CD8-positive, alpha-beta T cell (primary cell): ENCODE measurements at regions of chr11 and their contacts with region 1.

Region 1: GRCh38 chr11:32893343-32894148 is 935 bp downstream of the QSER1 start:
- DNase-seq: peak in 8 of 9 experiments; percentile 21 to 75 (median 54)
- ATAC-seq: peak; percentile 50
- H3K4me3 ChIP-seq: peak overlapping the region; percentile 79 to 87
- H3K4me3 Mint-ChIP-seq: peak overlapping the region; percentile 92
- H3K27ac ChIP-seq: peak overlapping the region; percentile 36 to 51
- H3K27ac Mint-ChIP-seq: peak overlapping the region; percentile 74
- H3K4me1 ChIP-seq: peaks cover 27% of the 10 kb centered on the region
- H3K4me1 Mint-ChIP-seq: peaks cover 33% of the 10 kb centered on the region
- H3K27me3 ChIP-seq: no peaks in the 10 kb centered on the region
- H3K27me3 Mint-ChIP-seq: no peaks in the 10 kb centered on the region
- CTCF ChIP-seq: peak; percentile 35

Region 2: DNA sequence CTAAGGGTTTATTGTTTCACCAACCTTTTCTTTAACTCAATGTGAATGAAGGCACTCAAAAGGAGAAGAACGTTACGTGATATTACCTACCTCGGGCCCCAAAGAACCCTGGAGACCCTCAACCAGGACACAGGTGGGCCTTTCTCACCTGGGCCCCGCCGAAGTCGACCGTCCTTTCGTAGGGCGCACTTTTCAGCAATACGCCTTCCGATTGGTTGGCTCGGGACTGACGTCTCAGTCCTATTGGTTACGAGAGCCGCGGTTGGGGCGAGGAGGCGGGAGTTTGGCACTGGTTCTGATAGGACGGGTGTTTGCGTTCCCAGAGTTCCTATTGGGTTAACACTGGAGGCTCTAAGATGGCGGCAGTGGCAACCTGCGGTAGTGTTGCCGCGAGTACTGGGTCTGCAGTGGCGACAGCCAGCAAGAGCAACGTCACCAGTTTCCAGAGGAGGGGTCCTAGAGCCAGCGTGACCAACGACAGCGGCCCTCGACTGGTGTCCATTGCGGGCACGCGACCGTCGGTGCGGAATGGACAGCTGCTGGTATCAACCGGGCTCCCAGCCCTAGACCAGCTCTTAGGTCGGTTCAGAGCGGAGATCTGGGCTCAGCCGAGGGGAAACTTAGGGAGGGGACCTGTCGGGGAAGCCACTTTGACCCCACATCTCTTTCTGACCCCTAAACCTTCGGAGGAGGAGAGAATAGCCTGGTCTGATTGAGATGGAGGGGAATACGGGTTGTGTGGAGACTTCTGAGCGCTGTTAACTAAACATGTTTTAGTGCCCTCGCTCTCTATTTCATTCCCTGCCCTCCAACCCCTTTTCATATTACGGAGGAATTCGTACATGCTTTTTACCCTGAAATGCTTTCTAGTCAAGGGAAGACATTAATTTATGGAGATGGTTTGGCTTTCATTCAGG is 1383.9 kb before region 1 on chr11 and contains the starts of genes ELP4 and IMMP1L:
- CTCF ChIA-PET with region 1: no interaction called
- POLR2A ChIA-PET with region 1: no interaction called
- intact Hi-C with region 1: loop called in 1 of 2 experiments (anchors 5 kb)
- DNase-seq: peak; percentile 91 to 98 (median 95)
- ATAC-seq: peak; percentile 98
- H3K4me3 ChIP-seq: peak within 1 kb of the TSS; percentile 96 to 99
- H3K4me3 Mint-ChIP-seq: peak within 1 kb of the TSS; percentile 100
- H3K27ac ChIP-seq: peak within 1 kb of the TSS; percentile 86 to 94
- H3K27ac Mint-ChIP-seq: peak within 1 kb of the TSS; percentile 99
- H3K4me1 ChIP-seq: peaks cover 24% of the 10 kb centered on the region
- H3K4me1 Mint-ChIP-seq: peaks cover 58% of the 10 kb centered on the region
- H3K27me3 ChIP-seq: no peaks in the 10 kb centered on the region
- H3K27me3 Mint-ChIP-seq: no peaks in the 10 kb centered on the region
- CTCF ChIP-seq: no peak
- total RNA-seq, gene ELP4: 7.9 to 8.0 TPM
- total RNA-seq, gene IMMP1L: 4.8 to 9.4 TPM

Region 3: GRCh38 chr11:32779136-32779535 is 114.4 kb before region 1 on chr11:
- CTCF ChIA-PET with region 1: no interaction called
- POLR2A ChIA-PET with region 1: no interaction called
- intact Hi-C with region 1: no loop called
- DNase-seq: no peak
- ATAC-seq: no peak
- H3K4me3 ChIP-seq: no peak overlapping the region
- H3K4me3 Mint-ChIP-seq: no peak overlapping the region
- H3K27ac ChIP-seq: no peak overlapping the region
- H3K27ac Mint-ChIP-seq: no peak overlapping the region
- H3K4me1 ChIP-seq: no peaks in the 10 kb centered on the region
- H3K4me1 Mint-ChIP-seq: peaks cover 10% of the 10 kb centered on the region
- H3K27me3 ChIP-seq: no peaks in the 10 kb centered on the region
- H3K27me3 Mint-ChIP-seq: no peaks in the 10 kb centered on the region
- CTCF ChIP-seq: no peak

Region 4: GRCh38 chr11:33039274-33040032 is 145.9 kb after region 1 on chr11 and contains the start of gene TCP11L1:
- CTCF ChIA-PET with region 1: no interaction called
- POLR2A ChIA-PET with region 1: interaction called, 3 read pairs
- intact Hi-C with region 1: loop called (anchors 2 kb)
- DNase-seq: peak; percentile 60 to 89 (median 83)
- ATAC-seq: peak; percentile 81
- H3K4me3 ChIP-seq: peak within 1 kb of the TSS; percentile 98
- H3K4me3 Mint-ChIP-seq: peak within 1 kb of the TSS; percentile 95
- H3K27ac ChIP-seq: peak within 1 kb of the TSS; percentile 71 to 86
- H3K27ac Mint-ChIP-seq: peak within 1 kb of the TSS; percentile 91
- H3K4me1 ChIP-seq: peaks cover 10% of the 10 kb centered on the region
- H3K4me1 Mint-ChIP-seq: peaks cover 20% of the 10 kb centered on the region
- H3K27me3 ChIP-seq: no peaks in the 10 kb centered on the region
- H3K27me3 Mint-ChIP-seq: no peaks in the 10 kb centered on the region
- CTCF ChIP-seq: no peak
- total RNA-seq, gene TCP11L1: 10.9 to 12.3 TPM

Region 5: DNA sequence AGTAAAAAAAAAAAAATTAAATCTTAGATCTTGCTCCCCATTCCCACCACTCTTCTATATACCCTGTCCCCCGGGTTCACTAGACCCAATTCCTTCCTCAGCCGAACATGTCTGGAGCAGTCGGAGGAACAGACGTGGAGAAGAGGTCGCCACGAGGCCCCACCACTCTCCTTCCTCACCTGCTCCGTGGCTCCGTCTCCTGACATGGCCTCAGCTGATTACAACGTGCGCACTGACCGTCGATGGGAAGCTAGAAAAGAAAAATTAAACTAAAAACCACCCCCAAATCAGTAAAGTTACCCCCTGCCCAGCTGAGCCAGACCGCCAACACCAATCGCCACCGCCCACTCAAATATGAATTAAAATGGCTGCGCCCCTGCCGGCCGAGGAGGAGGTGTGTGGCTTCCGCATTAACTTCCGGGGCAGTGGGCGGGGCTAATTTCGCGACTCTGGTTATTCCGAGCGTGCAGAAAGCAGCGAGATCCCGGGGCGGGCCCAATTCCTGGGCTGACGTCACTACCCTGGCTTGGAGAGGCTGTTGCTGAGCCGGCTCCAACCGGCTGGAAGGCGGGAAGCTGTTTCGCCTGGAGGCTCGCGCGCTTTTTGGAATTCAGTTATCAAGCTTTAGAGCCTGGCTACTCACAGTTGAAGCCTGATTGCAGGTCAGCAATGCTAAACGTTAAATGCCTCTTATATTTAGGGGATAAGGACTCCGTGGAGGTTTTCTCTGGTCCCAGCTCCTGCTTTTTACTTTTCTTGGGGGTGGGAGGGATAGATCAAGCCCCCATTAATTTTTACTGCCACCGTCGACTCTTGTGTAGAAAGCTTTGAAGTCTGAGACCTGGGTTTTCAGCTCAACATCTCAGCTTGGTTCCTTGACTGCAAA is 267.8 kb after region 1 on chr11 and contains the start of gene CSTF3:
- CTCF ChIA-PET with region 1: no interaction called
- POLR2A ChIA-PET with region 1: no interaction called
- intact Hi-C with region 1: loop called (anchors 5 kb)
- DNase-seq: peak; percentile 85 to 98 (median 94)
- ATAC-seq: peak; percentile 94
- H3K4me3 ChIP-seq: peak within 1 kb of the TSS; percentile 73 to 79
- H3K4me3 Mint-ChIP-seq: peak within 1 kb of the TSS; percentile 99
- H3K27ac ChIP-seq: peak within 1 kb of the TSS; percentile 77 to 89
- H3K27ac Mint-ChIP-seq: peak within 1 kb of the TSS; percentile 96
- H3K4me1 ChIP-seq: peaks cover 35% of the 10 kb centered on the region
- H3K4me1 Mint-ChIP-seq: peaks cover 47% of the 10 kb centered on the region
- H3K27me3 ChIP-seq: no peaks in the 10 kb centered on the region
- H3K27me3 Mint-ChIP-seq: no peaks in the 10 kb centered on the region
- CTCF ChIP-seq: no peak
- total RNA-seq, gene CSTF3: 7.0 to 7.9 TPM